Heart left ventricle (tissue), 16 donors: ENCODE measurements at regions of chr2 and their contacts with region 1.

Region 1: GRCh38 chr2:120693121-120693520 is 42.5 kb upstream of the GLI2 start:
- DNase-seq: no peak
- ATAC-seq: no peak
- H3K4me3 ChIP-seq: no peak overlapping the region
- H3K27ac ChIP-seq: no peak overlapping the region
- H3K4me1 ChIP-seq: peaks cover 0 to 5% (median 0%) of the 10 kb centered on the region in 12 donors
- H3K27me3 ChIP-seq: peaks cover 0 to 57% (median 16%) of the 10 kb centered on the region in 9 donors
- CTCF ChIP-seq: no peak
- POLR2A ChIP-seq: no peak

Region 2: DNA sequence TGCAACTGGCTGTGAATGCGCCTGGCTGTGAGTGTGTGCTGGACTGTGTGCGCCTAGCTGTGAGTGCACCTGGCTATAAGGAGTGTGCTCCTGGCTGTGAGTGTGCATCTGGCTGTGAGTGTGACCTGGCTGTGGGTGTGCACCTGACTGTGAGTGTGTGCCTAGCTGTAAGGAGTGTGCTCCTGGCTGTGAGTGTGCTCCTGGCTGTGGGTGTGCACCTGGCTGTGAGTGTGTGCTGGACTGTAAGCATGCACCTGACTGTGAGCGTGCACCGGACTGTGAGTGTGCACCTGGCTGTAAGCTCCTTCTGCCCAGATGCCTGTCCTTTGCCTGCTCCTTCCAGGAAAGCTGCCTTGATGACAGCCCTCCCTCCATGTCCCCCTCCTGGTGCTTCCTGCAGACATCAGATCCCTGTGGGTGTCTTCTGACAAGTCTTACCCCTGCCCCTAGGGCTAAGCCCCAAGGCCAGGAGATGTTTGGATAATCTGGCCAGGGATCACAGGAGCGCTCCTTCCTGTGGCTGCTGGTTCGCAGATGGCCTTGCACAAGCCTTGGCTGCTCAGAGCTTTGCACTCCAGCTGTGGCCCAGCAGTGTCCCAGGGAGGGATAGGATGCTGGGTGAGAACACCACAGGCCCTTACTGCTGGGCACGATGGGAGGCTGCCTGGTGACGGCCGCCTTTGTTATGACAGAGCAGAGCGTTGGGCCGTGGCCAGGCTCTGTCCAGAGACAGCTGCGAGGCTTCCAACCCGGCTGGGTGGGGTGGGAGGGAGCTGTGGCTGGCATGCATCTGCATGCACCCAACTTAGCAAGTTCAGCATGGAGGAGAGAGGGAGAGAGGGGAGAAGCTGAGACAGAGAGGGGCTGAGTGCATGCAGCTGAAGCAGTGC is 132.5 kb after region 1 on chr2:
- intact Hi-C with region 1: no loop called
- DNase-seq: peak in 3 of 5 donors; percentile 43 to 87 (median 65)
- ATAC-seq: peak; percentile 68 to 77 (median 73)
- H3K4me3 ChIP-seq: no peak overlapping the region
- H3K27ac ChIP-seq: peak overlapping the region in 1 of 12 donors; percentile 53
- H3K4me1 ChIP-seq: peaks cover 0 to 24% (median 9%) of the 10 kb centered on the region in 12 donors
- H3K27me3 ChIP-seq: no peaks in the 10 kb centered on the region
- CTCF ChIP-seq: no peak
- POLR2A ChIP-seq: no peak

Region 3: DNA sequence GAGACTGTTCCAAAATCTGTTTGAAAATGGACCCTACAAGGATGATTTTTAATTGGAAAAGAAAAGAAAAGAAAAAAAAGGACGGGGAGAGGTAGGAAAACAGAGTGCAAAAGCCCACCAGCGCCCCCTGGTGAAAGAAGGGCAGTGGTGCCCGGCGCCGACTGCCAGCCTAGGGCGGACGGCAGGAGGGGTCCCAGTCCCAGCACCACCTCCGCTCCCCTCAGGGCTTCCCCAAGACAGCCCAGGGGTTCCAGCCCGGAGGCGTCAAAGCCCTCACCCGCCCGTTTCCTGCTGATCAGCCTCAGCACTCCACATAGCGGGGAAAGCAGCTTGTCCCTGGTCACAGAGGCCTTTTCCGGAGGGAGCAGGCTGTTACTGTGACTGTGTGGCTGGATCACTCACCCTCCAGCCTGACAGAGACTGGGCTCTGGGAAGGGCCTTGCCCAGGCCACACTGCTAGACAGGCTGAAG is 377.9 kb after region 1 on chr2:
- intact Hi-C with region 1: loop called in 7 of 10 experiments (anchors 1 to 2 kb)
- DNase-seq: peak; percentile 54 to 81 (median 59)
- ATAC-seq: peak; percentile 18 to 79 (median 48)
- H3K4me3 ChIP-seq: no peak overlapping the region
- H3K27ac ChIP-seq: no peak overlapping the region
- H3K4me1 ChIP-seq: peaks cover 0 to 8% (median 0%) of the 10 kb centered on the region in 12 donors
- H3K27me3 ChIP-seq: peaks cover 0 to 17% (median 4%) of the 10 kb centered on the region in 9 donors
- CTCF ChIP-seq: peak; percentile 83 to 96 (median 92)
- POLR2A ChIP-seq: no peak